PC-3 (cell line): ENCODE measurements at regions of chr19 and their contacts with region 1.

Region 1: GRCh38 chr19:52139252-52140031 is at the start of gene ZNF616:
- DNase-seq: peak; percentile 96
- ATAC-seq: peak; percentile 92
- H3K4me3 ChIP-seq: peak within 1 kb of the TSS; percentile 91
- H3K27ac ChIP-seq: peak within 1 kb of the TSS; percentile 81
- H3K4me1 ChIP-seq: peaks cover 7% of the 10 kb centered on the region; the same call in 1 of the 2 replicates
- H3K27me3 ChIP-seq: no peaks in the 10 kb centered on the region
- CTCF ChIP-seq: peak; percentile 90
- total RNA-seq, gene ZNF616: 3.7 and 3.9 TPM in 2 replicates

Region 2: GRCh38 chr19:51493776-51494175 is 645.7 kb before region 1 on chr19:
- CTCF ChIA-PET with region 1: no interaction called
- POLR2A ChIA-PET with region 1: no interaction called
- intact Hi-C with region 1: no loop called
- DNase-seq: no peak
- ATAC-seq: no peak
- H3K4me3 ChIP-seq: no peak overlapping the region
- H3K27ac ChIP-seq: no peak overlapping the region
- H3K4me1 ChIP-seq: peaks cover 8% of the 10 kb centered on the region
- H3K27me3 ChIP-seq: peaks cover 63% of the 10 kb centered on the region
- CTCF ChIP-seq: no peak

Region 3: DNA sequence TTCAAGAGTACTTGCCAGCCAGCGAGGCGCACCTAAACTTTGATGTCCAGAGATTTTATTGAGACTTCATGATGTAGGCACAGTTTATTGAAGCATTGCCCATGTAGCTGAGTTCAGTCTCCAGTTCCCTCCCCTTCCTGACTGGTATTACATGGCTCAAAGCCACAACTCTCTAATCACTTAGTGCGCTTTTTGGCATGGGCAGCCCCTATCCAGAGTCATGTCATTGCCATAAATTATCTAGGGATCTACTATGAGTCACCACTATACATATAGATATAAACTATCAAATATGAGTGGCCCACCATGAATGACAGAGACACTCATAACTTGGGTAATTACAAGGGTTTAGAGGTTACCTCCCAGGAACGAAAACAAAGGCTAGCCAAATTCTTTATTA is 118.9 kb before region 1 on chr19:
- CTCF ChIA-PET with region 1: no interaction called
- POLR2A ChIA-PET with region 1: no interaction called
- intact Hi-C with region 1: no loop called
- DNase-seq: peak; percentile 50
- ATAC-seq: peak; percentile 88
- H3K4me3 ChIP-seq: no peak overlapping the region
- H3K27ac ChIP-seq: no peak overlapping the region
- H3K4me1 ChIP-seq: no peaks in the 10 kb centered on the region
- H3K27me3 ChIP-seq: no peaks in the 10 kb centered on the region
- CTCF ChIP-seq: no peak

Region 4: DNA sequence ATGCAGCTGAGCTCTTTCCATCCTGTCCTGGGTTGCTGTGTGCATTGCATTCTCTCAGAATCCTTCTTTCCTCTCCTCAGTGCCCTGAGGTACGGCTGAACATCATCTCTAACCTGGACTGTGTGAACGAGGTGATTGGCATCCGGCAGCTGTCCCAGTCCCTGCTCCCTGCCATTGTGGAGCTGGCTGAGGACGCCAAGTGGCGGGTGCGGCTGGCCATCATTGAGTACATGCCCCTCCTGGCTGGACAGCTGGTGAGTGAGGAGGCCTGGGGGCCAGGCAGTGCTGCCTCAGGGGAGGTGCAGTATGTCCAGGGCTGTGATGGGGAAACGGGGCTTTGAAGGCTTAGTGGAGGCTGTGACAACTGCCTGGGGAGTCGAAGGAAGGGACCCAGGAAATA is 80.2 kb after region 1 on chr19:
- CTCF ChIA-PET with region 1: no interaction called
- POLR2A ChIA-PET with region 1: no interaction called
- intact Hi-C with region 1: no loop called
- DNase-seq: no peak
- ATAC-seq: no peak
- H3K4me3 ChIP-seq: no peak overlapping the region
- H3K27ac ChIP-seq: no peak overlapping the region
- H3K4me1 ChIP-seq: no peaks in the 10 kb centered on the region
- H3K27me3 ChIP-seq: no peaks in the 10 kb centered on the region
- CTCF ChIP-seq: no peak

Region 5: GRCh38 chr19:52351511-52351910 is 212.1 kb after region 1 on chr19:
- CTCF ChIA-PET with region 1: interaction called, 14 read pairs
- POLR2A ChIA-PET with region 1: no interaction called
- intact Hi-C with region 1: no loop called
- DNase-seq: no peak
- ATAC-seq: no peak
- H3K4me3 ChIP-seq: no peak overlapping the region
- H3K27ac ChIP-seq: no peak overlapping the region
- H3K4me1 ChIP-seq: no peaks in the 10 kb centered on the region
- H3K27me3 ChIP-seq: no peaks in the 10 kb centered on the region
- CTCF ChIP-seq: 0 out of 2 replicates have a peak, but pooled peaks have one; percentile 14